PC-9 (cell line): ENCODE measurements at regions of chr1 and their contacts with region 1.

Region 1: DNA sequence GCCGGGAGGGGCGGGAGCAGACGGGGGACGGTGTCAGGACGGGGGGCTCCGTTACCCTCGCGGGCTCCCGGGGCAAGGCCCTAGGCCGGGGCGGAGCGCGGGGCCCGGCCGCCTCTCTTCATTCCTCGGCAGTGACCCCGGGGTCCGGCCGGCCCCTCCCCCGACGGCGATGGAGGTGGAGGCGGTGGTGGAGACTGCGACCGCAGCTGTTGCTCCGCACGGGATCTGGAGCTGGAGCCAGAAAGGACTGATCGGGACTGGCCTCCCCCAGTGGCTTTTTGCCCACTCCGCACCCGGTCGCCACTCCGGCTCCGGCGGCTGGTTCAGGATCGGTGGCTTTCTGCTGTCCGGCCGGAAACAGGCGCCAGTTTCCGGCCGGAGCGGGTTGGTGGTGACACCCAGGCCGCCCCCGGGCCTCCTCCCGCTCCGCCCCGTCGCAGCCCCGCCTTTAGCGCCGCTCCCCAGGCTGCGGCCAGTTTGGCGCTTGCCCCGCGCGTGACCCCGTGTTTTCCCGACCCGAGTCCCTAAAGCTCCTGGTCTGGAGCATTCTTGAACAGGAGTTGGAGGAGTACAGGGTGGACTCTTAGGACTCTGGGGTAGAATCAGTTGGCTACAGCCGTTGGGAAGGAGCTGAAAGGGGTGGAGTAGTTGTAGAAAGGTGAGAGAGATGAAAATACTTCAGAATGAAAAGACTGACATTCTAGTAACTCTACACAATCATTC is at the start of gene OTUD7B:
- DNase-seq: peak; percentile 74 to 87
- H3K4me3 ChIP-seq: peak within 1 kb of the TSS; percentile 98
- H3K27ac ChIP-seq: peak within 1 kb of the TSS; percentile 91
- H3K4me1 ChIP-seq: peaks cover 66% of the 10 kb centered on the region
- H3K27me3 ChIP-seq: no peaks in the 10 kb centered on the region
- CTCF ChIP-seq: no peak
- total RNA-seq, gene OTUD7B: 30.2 and 30.7 TPM in 2 replicates

Region 2: GRCh38 chr1:149927135-149927502 is 83.4 kb before region 1 on chr1:
- CTCF ChIA-PET with region 1: no interaction called
- POLR2A ChIA-PET with region 1: no interaction called
- intact Hi-C with region 1: no loop called
- DNase-seq: peak; percentile 5 to 39
- H3K4me3 ChIP-seq: peak overlapping the region; percentile 69
- H3K27ac ChIP-seq: peak overlapping the region; percentile 85
- H3K4me1 ChIP-seq: peaks cover 29% of the 10 kb centered on the region
- H3K27me3 ChIP-seq: no peaks in the 10 kb centered on the region
- CTCF ChIP-seq: no peak

Region 3: DNA sequence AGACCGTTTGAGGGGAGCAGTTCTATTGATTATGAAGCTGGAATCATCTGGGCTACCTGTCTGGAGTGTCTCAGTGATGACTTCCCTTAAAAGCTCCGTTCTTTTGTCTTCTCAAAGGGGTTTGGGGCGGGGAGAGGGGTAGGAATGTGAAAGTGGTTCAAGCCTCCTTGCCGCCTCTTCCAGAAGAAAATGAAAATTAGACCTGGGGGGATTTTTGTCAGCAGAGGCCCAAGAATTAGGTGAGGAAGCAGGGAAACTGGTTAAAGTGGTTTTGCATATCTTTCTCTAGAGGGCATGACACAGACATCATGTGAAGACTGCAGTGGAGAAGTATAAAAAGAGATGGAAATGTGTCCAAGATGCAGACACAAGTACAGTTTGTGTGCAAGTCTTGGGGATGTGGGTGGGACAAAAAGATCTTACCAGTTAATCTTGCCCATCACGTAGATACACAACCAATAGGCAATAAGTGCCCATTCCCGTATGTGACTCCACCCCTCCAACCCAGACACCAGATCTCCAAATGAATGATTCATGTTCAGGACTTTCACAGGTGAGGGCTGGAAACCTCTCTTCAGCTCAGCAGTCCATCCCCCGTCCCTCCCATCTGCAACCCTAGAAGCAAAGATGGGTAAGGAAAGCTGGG is 73.4 kb before region 1 on chr1:
- CTCF ChIA-PET with region 1: no interaction called
- POLR2A ChIA-PET with region 1: no interaction called
- intact Hi-C with region 1: loop called (anchors 2 kb)
- DNase-seq: peak; percentile 80 to 92
- H3K4me3 ChIP-seq: peak overlapping the region; percentile 81
- H3K27ac ChIP-seq: peak overlapping the region; percentile 95
- H3K4me1 ChIP-seq: peaks cover 40% of the 10 kb centered on the region
- H3K27me3 ChIP-seq: no peaks in the 10 kb centered on the region
- CTCF ChIP-seq: 0 out of 2 replicates have a peak, but pooled peaks have one; percentile 16

Region 4: DNA sequence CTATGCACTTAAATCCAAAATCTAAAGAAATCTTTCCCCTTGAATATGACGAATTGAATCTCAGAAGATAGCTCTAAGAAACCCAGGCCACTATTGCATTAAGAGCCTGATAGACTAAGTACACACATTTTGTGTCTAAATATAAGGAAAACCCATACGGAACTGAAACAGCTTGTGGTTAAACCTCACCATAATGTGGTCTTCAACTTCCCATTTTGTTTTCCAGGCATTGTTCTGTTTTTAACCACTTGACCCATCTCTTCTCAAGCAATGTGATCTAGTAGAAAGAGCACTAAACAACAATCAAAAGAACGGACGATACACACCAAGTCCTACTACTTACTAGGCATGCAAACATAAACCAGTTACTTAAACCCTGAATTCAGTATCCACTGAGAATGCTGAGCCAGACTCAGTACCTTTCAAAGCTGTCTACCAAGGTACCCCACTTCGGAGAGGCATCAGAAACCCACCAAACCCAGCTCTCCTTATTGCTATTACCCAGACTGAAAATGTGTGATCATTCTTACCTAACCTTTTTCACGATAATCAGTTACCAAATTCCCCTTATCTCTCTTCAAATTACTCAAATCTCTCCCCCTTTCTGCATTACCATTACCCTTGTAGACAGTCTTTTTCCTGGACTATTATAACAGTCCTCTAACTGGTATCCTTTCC is 12.8 kb before region 1 on chr1:
- CTCF ChIA-PET with region 1: no interaction called
- POLR2A ChIA-PET with region 1: interaction called, 10 read pairs
- intact Hi-C with region 1: no loop called
- DNase-seq: no peak
- H3K4me3 ChIP-seq: no peak overlapping the region
- H3K27ac ChIP-seq: peak overlapping the region; percentile 64
- H3K4me1 ChIP-seq: peaks cover 28% of the 10 kb centered on the region
- H3K27me3 ChIP-seq: no peaks in the 10 kb centered on the region
- CTCF ChIP-seq: no peak

Region 5: GRCh38 chr1:150053926-150054325 is 43.4 kb after region 1 on chr1:
- CTCF ChIA-PET with region 1: no interaction called
- POLR2A ChIA-PET with region 1: no interaction called
- intact Hi-C with region 1: loop called (anchors 1 kb)
- DNase-seq: no peak
- H3K4me3 ChIP-seq: no peak overlapping the region
- H3K27ac ChIP-seq: no peak overlapping the region
- H3K4me1 ChIP-seq: peaks cover 18% of the 10 kb centered on the region; the same call in 1 of the 2 replicates
- H3K27me3 ChIP-seq: no peaks in the 10 kb centered on the region
- CTCF ChIP-seq: no peak

Region 6: DNA sequence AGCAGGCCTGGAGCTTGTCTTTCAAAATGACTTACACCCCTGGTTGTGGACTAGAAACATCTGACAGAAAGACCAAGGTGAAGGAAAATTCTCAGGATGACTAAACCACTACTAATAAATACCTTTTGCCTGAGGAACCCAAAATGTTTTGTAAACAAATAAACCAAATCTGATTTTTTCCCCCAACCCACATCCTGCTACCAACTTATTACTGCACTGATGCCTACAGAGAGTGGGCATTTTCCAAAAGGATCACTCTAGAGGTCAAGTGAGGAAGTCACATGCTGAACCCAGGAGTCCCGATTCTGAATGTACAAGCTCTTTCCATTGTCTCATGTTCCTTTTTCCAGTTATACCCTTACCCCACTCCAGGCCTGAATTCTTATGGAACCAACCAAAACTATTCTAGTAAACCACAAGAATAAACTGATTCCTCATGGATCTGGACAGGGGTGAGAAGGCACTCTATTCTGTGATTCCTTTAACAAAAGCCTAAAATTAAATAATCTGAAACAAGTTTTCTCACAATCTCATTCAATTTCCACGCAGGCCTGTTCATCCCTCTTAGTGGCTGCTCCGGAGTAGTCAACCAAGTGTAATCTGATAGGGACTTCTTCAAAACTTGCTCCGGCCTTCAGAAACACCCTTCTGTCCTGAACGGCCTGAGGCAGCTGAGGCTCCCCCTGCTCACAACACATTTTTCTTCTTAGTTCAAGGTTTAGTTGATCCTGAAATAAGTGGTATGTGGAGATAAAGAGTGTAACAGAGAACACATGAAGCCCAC is 1315.3 kb after region 1 on chr1:
- CTCF ChIA-PET with region 1: no interaction called
- POLR2A ChIA-PET with region 1: no interaction called
- intact Hi-C with region 1: no loop called
- DNase-seq: peak in 1 of 2 experiments; percentile 38
- H3K4me3 ChIP-seq: peak overlapping the region; percentile 74; the same call in 1 of the 2 replicates
- H3K27ac ChIP-seq: no peak overlapping the region
- H3K4me1 ChIP-seq: peaks cover 20% of the 10 kb centered on the region
- H3K27me3 ChIP-seq: no peaks in the 10 kb centered on the region
- CTCF ChIP-seq: no peak